Activated CD4-positive, alpha-beta memory T cell treated with anti-CD3 and anti-CD28 coated beads for 36 hours (primary cell): ENCODE measurements at regions of chrX and their contacts with region 1.

Region 1: DNA sequence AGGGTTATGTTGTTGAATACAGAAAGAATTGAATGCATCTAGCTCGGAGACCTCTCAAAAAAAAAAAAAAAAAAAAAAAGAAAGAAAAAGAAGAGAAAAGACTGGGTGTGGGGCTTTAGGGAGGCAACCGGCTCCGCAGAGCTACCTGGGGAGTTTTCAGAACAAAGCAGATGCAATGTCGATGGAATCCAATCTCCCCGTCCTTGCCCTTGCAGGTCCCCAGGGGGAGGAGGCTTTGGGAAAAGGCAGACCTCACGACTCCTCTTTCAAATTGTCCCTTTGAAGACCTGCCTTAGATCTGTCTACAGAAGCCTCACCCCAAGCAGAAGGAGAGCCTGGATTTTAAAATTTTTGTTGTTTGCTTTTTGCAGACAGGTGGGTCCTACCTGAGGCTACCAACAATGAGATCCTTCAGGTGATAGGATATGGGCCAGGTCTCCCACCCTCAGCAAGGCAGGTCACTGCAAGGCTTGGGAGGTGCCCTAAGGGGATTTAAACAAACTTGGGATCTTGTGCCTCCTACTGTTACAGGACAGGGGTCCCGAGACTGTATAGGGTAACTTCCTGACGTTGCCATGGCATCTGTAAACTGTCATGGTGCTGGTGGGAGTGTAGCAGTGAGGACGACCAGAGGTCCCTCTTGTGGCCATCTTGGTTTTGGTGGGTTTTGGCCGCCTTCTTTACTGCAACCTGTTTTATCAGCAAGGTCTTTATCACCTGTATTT is 75.2 kb upstream of the PRKX start:
- DNase-seq: peak; percentile 25
- H3K4me3 Mint-ChIP-seq: no peak overlapping the region
- H3K27ac Mint-ChIP-seq: no peak overlapping the region
- H3K4me1 Mint-ChIP-seq: peaks cover 3% of the 10 kb centered on the region
- H3K27me3 Mint-ChIP-seq: no peaks in the 10 kb centered on the region

Region 2: GRCh38 chrX:3651276-3651675 is 137.4 kb before region 1 on chrX:
- CTCF ChIA-PET with region 1: interaction called, 4 read pairs
- POLR2A ChIA-PET with region 1: no interaction called
- intact Hi-C with region 1: loop called (anchors 2 kb)
- DNase-seq: no peak
- H3K4me3 Mint-ChIP-seq: no peak overlapping the region
- H3K27ac Mint-ChIP-seq: peak overlapping the region; percentile 39
- H3K4me1 Mint-ChIP-seq: peaks cover 6% of the 10 kb centered on the region
- H3K27me3 Mint-ChIP-seq: no peaks in the 10 kb centered on the region

Region 3: DNA sequence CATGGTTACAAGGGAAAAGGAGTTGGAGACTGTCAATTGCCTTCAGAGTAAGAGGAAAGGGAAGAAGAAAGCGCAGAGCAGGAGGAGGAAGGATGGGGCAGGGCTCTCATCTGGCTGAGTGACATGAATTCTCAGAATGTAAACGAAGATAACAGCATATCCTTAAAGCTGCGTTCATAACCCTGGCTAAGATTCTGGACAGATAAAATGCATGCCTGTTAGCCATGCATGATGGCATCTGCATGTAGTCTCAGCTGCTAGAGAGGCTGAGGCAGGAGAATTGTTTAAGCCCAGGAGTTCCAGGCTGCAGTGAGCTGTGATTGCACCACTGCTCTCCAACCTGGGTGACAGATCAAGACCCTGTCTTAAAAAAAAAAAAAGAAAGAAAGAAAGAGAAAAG is 418.3 kb after region 1 on chrX:
- CTCF ChIA-PET with region 1: no interaction called
- POLR2A ChIA-PET with region 1: no interaction called
- intact Hi-C with region 1: no loop called
- DNase-seq: no peak
- H3K4me3 Mint-ChIP-seq: no peak overlapping the region
- H3K27ac Mint-ChIP-seq: no peak overlapping the region
- H3K4me1 Mint-ChIP-seq: no peaks in the 10 kb centered on the region
- H3K27me3 Mint-ChIP-seq: no peaks in the 10 kb centered on the region